Naive thymus-derived CD4-positive, alpha-beta T cell (primary cell): ENCODE measurements at regions of chr9 and their contacts with region 1.

Region 1: DNA sequence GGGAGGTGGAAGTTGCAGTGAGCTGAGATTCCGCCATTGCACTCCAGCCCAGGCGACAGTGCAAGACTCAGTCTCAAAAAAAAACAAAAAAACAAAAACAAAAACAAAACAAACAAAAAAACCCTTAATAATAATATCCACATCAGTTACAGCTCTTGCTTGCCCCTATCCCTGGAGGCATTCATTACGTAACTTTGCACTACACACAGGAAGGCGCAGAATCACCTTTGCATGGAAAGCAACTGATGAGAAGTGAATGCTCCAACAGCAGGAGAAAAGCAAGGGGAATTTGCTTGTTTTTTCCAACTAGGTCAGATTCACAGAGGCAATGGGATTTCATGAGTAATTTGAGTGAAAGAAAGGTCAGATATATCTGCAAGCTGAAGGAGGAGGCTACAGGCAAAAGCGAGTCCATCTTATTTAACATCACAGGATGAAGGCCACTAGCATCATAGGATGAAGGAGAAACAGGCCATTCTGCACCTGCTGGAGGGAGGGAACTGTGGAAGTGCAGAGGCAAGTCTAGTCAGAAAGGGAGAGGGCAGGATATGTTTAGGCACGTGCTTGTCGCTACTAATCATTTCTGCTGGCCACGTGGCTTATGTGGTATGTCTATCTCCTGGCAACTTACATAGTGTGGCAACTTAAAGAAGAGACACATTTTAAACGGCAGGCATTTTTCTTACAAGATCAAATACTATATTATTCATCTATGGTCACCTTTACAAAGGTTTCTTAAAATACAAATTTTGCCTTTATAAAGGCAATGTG is 74.1 kb downstream of the GNAQ start:
- DNase-seq: no peak
- ATAC-seq: peak; percentile 36
- H3K4me3 ChIP-seq: no peak overlapping the region
- H3K4me3 Mint-ChIP-seq: peak overlapping the region in 2 of 10 donors; percentile 4 to 55
- H3K27ac ChIP-seq: no peak overlapping the region
- H3K27ac Mint-ChIP-seq: peak overlapping the region in 2 of 9 donors; percentile 15 to 18
- H3K4me1 ChIP-seq: peaks cover 0 to 11% of the 10 kb centered on the region in 2 donors
- H3K4me1 Mint-ChIP-seq: peaks cover 41 to 89% (median 73%) of the 10 kb centered on the region in 7 donors
- H3K27me3 ChIP-seq: no peaks in the 10 kb centered on the region
- H3K27me3 Mint-ChIP-seq: no peaks in the 10 kb centered on the region

Region 2: DNA sequence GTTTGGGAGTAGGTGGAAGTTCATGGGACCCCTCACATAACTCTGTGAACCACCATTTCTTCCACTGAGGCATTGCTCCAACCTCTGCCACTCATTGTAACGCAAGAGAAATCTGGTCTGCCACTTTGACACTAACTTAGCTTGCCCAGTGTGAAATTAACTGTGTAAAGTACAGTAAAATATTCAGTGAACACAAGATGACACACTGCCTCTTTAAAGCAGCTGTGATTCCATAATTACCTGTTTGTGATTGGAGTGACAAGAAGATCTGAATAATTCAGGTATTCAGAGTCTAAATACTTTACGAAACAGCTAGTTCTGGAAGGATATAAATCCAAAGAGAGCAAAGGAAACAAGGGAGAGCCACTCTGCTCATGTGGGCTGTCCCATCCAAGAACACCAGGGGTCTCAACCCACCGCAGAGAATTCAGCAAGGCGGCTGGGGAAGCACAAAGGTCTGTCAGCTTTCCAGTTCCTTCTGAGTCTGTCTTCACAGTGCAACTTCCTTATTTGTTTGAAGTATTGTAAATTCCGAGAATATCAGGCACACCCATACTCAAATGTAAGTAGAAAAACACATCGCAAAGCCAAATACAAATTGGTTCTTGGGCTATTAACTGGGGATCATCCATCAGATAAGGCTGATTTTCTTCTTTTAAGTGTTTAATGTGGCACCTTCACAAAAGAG is 12.8 kb before region 1 on chr9:
- CTCF ChIA-PET with region 1: interaction called, 3 read pairs
- POLR2A ChIA-PET with region 1: interaction called, 4 read pairs
- intact Hi-C with region 1: loop called (anchors 2 kb)
- DNase-seq: peak in 7 of 9 donors; percentile 9 to 47 (median 31)
- ATAC-seq: peak; percentile 73
- H3K4me3 ChIP-seq: peak overlapping the region; percentile 14
- H3K4me3 Mint-ChIP-seq: peak overlapping the region; percentile 50 to 86 (median 78)
- H3K27ac ChIP-seq: peak overlapping the region; percentile 44
- H3K27ac Mint-ChIP-seq: peak overlapping the region; percentile 58 to 99 (median 87)
- H3K4me1 ChIP-seq: peaks cover 0 to 44% of the 10 kb centered on the region in 2 donors
- H3K4me1 Mint-ChIP-seq: peaks cover 42 to 77% (median 60%) of the 10 kb centered on the region in 7 donors
- H3K27me3 ChIP-seq: no peaks in the 10 kb centered on the region
- H3K27me3 Mint-ChIP-seq: no peaks in the 10 kb centered on the region